CD8-positive, alpha-beta T cell (primary cell): ENCODE measurements at regions of chr6 and their contacts with region 1.

Region 1: GRCh38 chr6:25122001-25122400 is 157.2 kb upstream of the CARMIL1 start:
- DNase-seq: no peak
- ATAC-seq: no peak
- H3K4me3 ChIP-seq: no peak overlapping the region
- H3K4me3 Mint-ChIP-seq: no peak overlapping the region
- H3K27ac ChIP-seq: no peak overlapping the region
- H3K27ac Mint-ChIP-seq: no peak overlapping the region
- H3K4me1 ChIP-seq: peaks cover 5% of the 10 kb centered on the region
- H3K4me1 Mint-ChIP-seq: peaks cover 23% of the 10 kb centered on the region
- H3K27me3 ChIP-seq: no peaks in the 10 kb centered on the region
- H3K27me3 Mint-ChIP-seq: no peaks in the 10 kb centered on the region
- CTCF ChIP-seq: no peak

Region 2: DNA sequence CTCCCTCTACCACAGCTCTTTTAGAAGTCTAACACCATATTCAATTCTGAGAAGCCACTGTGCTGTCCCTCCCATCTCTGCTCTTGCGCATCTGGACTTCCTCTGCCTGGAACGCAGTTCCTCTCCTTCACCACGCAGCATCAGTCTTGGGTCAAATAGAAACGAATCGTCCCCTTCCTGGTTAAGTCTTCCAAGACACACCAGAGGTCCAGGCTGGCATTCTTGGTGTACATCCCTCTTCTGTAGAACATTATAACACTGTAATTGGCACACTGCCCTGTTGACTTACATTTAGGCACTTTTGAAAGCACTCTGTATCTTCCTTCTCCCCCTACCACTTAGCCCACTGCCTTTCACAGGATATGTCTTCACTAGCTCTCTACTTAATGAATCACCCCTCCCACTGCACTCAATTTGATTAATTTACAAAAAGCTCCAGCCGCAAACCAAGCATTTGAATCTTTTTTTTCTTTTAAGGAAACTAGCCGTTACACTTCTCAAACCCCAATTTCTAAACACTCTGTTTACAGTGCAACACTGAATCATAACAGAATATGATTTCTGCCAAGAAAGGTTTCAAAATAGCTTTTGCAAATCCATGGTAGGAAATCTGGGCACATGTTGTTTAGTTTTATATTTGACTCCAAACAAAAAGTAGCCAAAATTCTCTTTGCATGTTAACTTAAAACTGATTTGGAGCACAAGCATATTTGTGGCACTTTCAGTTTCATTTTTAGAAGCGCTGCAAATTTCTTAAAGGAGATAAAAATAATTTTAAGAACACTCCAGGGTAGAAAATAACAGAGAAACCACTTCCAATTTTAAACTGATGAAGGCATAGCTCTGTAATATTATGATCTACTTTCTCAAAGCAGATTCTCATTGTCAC is 16.5 kb after region 1 on chr6:
- CTCF ChIA-PET with region 1: no interaction called
- POLR2A ChIA-PET with region 1: interaction called, 3 read pairs
- intact Hi-C with region 1: loop called in 1 of 2 experiments (anchors 2 kb)
- DNase-seq: peak; percentile 8 to 88 (median 63)
- ATAC-seq: peak; percentile 90
- H3K4me3 ChIP-seq: peak overlapping the region; percentile 58 to 72
- H3K4me3 Mint-ChIP-seq: peak overlapping the region; percentile 89
- H3K27ac ChIP-seq: peak overlapping the region; percentile 70 to 85
- H3K27ac Mint-ChIP-seq: peak overlapping the region; percentile 93
- H3K4me1 ChIP-seq: peaks cover 25% of the 10 kb centered on the region
- H3K4me1 Mint-ChIP-seq: peaks cover 39% of the 10 kb centered on the region
- H3K27me3 ChIP-seq: no peaks in the 10 kb centered on the region
- H3K27me3 Mint-ChIP-seq: no peaks in the 10 kb centered on the region
- CTCF ChIP-seq: no peak

Region 3: DNA sequence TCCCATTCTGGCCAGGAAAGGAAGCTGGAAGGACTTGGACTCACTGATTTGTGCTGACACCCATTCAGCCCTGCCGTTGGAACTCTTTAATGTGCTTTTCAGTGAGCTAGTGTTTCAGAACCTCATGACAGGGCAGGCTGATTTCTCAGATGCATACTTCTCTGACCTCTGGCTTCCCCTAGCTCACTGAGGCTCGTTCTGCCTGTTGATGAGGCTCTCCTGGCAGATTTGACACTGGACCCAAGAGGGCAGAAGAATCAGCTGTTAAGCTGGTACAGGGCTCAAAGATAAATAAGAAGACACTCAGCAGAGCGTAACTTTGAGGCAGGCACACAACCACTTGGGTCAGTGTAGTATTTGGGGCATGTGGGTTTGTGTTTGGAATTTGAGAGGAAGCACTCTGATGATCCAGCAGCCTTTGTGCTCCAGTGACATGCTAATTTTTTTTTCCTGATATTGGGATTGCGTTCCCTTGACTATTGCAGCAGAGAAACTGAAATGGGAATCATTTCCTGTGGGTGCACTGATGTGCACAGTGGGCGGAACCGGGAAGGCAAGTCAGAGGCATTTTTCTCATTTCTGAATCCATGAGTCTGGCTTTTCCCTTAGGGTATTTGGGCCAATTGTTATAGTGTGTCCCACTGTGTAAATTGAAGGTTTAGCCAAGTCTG is 237.3 kb after region 1 on chr6:
- CTCF ChIA-PET with region 1: no interaction called
- POLR2A ChIA-PET with region 1: no interaction called
- intact Hi-C with region 1: no loop called
- DNase-seq: no peak
- ATAC-seq: no peak
- H3K4me3 ChIP-seq: no peak overlapping the region
- H3K4me3 Mint-ChIP-seq: no peak overlapping the region
- H3K27ac ChIP-seq: no peak overlapping the region
- H3K27ac Mint-ChIP-seq: no peak overlapping the region
- H3K4me1 ChIP-seq: no peaks in the 10 kb centered on the region
- H3K4me1 Mint-ChIP-seq: peaks cover 19% of the 10 kb centered on the region
- H3K27me3 ChIP-seq: no peaks in the 10 kb centered on the region
- H3K27me3 Mint-ChIP-seq: no peaks in the 10 kb centered on the region
- CTCF ChIP-seq: no peak